Right cardiac atrium (tissue), 5 donors: ENCODE measurements at regions of chr5 and their contacts with region 1.

Region 1: DNA sequence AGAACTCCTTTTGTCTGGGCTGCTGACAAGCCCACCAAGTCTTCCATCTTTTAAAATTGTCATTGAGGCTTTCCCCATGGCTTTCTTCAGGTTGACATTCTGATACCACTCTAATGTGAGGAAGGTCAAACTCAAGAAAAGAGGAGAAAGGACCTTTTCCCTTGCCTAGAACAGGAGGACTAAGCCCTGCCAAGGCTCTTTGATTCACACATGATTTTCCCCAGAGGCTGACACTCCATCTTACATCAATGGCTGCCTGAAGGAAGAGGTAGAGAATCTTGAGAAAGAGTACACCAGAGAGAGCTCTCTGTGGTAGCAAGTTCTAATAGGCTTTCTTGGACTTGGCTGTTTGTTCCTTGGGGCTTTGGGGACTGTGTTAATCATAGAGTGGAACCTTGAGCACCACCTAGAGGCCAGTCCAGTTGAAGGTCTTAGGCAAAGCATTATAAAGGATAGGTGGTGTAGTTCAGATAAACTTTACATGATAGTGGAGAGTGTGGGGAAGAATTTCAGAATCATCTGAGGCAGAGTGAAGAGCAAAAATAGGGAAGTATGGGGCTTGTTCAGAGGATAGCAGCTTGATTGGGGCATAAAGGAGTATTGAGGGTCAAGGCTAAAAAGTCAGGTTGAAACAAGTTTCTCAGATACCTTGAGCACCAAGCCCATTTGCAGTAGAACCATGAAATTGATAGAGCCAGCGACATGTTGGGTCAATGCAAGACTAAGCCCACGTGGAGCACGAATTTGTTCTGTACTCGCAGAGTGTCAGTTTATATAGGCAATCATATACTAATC is 36.7 kb downstream of the NDFIP1 start:
- DNase-seq: peak in 2 of 3 donors; percentile 57 to 83
- ATAC-seq: peak; percentile 85 to 87
- H3K4me3 ChIP-seq: no peak overlapping the region
- H3K27ac ChIP-seq: no peak overlapping the region
- H3K4me1 ChIP-seq: no peaks in the 10 kb centered on the region
- H3K27me3 ChIP-seq: no peaks in the 10 kb centered on the region

Region 2: GRCh38 chr5:141992349-141992963 is 152.8 kb before region 1 on chr5:
- intact Hi-C with region 1: loop called in 3 of 4 experiments (anchors 5 kb)
- DNase-seq: peak; percentile 72 to 84 (median 73)
- ATAC-seq: peak; percentile 69 to 79
- H3K4me3 ChIP-seq: no peak overlapping the region
- H3K27ac ChIP-seq: no peak overlapping the region
- H3K4me1 ChIP-seq: no peaks in the 10 kb centered on the region
- H3K27me3 ChIP-seq: no peaks in the 10 kb centered on the region

Region 3: GRCh38 chr5:142012792-142013388 is 132.4 kb before region 1 on chr5 and contains the start of gene GNPDA1:
- intact Hi-C with region 1: loop called in 1 of 4 experiments (anchors 5 kb)
- DNase-seq: peak; percentile 83 to 94 (median 93)
- ATAC-seq: peak; percentile 88 to 93
- H3K4me3 ChIP-seq: peak within 1 kb of the TSS; percentile 70
- H3K27ac ChIP-seq: peak within 1 kb of the TSS; percentile 73
- H3K4me1 ChIP-seq: peaks cover 4% of the 10 kb centered on the region
- H3K27me3 ChIP-seq: no peaks in the 10 kb centered on the region
- total RNA-seq, gene GNPDA1: 16.9 to 22.5 (median 19.2) TPM

Region 4: DNA sequence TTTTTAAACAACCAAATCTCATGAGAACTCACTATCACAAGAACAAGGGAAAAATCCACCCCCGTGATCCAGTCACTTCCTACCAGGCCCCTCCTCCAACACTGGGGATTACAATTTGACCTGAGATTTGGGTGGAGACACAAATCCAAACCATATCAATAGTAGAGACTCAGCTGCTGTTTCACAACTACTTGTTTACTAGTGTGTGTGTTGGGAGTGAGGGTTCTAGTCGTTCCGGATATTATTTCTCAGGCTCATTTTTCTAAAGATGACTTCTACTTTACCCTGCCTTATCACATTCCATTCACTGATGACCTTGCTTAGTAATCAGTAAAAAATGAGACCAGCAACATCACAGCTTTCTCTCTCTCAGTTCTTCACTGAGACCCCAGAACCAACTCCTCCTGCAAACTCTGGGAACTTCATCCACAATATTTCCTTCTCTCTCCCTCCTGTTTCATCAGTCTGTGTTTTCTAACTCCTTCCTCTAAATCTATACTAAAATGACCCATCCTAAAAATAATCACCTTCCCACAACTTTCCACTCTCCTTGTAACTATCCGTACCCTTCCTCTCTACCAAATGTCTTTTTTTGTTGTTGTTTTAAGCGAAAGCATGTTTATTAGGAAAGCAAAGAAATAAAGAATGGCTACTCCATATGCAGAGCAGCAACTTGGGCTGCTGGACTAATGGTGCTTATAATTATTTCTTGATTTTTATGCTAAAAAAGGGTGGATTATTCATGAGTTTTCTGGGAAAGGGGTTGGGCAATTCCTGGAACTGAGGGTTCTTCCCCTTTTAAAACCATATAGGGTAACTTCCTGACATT is 301.0 kb after region 1 on chr5:
- intact Hi-C with region 1: no loop called
- DNase-seq: no peak
- ATAC-seq: peak; percentile 80 to 82
- H3K4me3 ChIP-seq: no peak overlapping the region
- H3K27ac ChIP-seq: peak overlapping the region; percentile 75
- H3K4me1 ChIP-seq: no peaks in the 10 kb centered on the region
- H3K27me3 ChIP-seq: no peaks in the 10 kb centered on the region

Region 5: GRCh38 chr5:143106174-143106573 is 960.9 kb after region 1 on chr5:
- intact Hi-C with region 1: no loop called
- DNase-seq: peak in 2 of 3 donors; percentile 38 to 76
- ATAC-seq: peak; percentile 76 to 83
- H3K4me3 ChIP-seq: no peak overlapping the region
- H3K27ac ChIP-seq: no peak overlapping the region
- H3K4me1 ChIP-seq: peaks cover 13% of the 10 kb centered on the region
- H3K27me3 ChIP-seq: no peaks in the 10 kb centered on the region